Activated CD4-positive, alpha-beta memory T cell treated with anti-CD3 and anti-CD28 coated beads, Interleukin-2, amount 10 ng/mL, durations not matched to agents 7 days and 5 days (primary cell): ENCODE measurements at regions of chr15 and their contacts with region 1.

Region 1: DNA sequence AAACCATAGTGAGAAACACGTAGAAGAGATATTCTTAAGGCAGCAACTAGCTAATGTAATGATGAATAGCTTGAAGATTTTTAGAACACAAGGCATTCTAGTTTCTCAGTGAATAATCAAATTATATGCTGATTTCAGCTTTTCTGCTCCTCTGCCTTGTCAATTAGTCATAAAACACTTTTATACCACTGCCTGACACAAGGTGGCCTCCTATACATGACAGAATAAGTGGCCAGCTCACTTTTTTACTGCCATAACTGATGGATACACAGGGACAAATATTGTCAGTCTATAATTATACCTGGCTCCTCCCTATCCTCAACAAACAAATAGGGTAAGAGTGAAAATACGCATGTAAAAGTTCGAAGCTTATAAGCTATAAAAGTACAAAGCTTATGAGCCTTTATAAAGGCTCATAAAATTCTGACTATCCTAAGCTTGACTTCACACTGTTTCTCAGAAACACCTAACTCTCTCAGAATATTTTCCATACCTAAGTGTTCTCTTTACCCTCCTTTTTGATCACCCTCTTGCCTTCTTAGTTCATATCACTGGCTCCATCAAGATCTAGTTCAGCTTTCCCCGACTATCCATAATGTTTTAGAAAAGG is 81.6 kb downstream of the HERC1 start:
- DNase-seq: peak; percentile 38
- H3K4me3 Mint-ChIP-seq: no peak overlapping the region
- H3K27ac Mint-ChIP-seq: no peak overlapping the region
- H3K4me1 Mint-ChIP-seq: no peaks in the 10 kb centered on the region
- H3K27me3 Mint-ChIP-seq: no peaks in the 10 kb centered on the region

Region 2: DNA sequence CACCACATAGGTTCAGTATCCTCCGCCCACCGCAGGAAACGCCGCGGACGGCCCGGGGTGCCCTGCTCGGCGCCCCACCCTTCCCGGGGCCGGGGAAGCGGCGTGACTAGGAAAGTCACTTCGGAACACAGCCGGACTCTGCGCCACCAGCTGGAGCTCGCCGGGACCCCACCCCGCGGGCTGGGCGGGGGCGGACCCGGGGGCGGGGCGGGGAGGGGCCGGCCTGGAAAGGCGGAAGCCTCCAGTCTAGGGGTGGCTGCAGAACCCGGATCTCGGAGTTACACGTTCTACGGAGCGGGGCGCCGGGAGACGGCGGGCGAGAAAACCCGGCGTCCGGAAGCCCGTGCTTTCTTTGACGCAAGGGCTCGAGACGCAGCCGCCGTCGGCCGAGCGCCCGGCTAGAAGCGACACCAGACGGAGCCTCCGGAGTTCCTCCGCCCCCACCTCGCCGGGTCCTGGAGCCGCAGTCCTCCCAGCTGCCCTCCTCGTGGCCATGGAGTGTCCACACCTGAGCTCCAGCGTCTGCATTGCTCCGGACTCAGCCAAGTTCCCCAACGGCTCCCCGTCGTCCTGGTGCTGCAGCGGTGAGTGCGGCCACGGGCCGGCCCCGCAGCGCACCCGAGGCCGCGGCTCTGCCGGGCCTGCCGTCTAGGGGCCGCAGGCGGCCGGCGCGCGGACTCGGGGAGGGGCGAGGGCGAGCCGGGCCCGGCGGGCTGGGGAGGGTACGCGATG is 247.8 kb before region 1 on chr15 and contains the start of gene USP3:
- CTCF ChIA-PET with region 1: no interaction called
- POLR2A ChIA-PET with region 1: no interaction called
- DNase-seq: peak; percentile 94
- H3K4me3 Mint-ChIP-seq: peak within 1 kb of the TSS; percentile 94
- H3K27ac Mint-ChIP-seq: peak within 1 kb of the TSS; percentile 95
- H3K4me1 Mint-ChIP-seq: peaks cover 82% of the 10 kb centered on the region
- H3K27me3 Mint-ChIP-seq: no peaks in the 10 kb centered on the region
- total RNA-seq, gene USP3: 67.9 to 68.7 TPM

Region 3: GRCh38 chr15:63610200-63610841 is 141.9 kb before region 1 on chr15:
- CTCF ChIA-PET with region 1: interaction called, 21 read pairs
- POLR2A ChIA-PET with region 1: no interaction called
- DNase-seq: peak; percentile 86
- H3K4me3 Mint-ChIP-seq: no peak overlapping the region
- H3K27ac Mint-ChIP-seq: peak overlapping the region; percentile 86
- H3K4me1 Mint-ChIP-seq: peaks cover 49% of the 10 kb centered on the region
- H3K27me3 Mint-ChIP-seq: no peaks in the 10 kb centered on the region

Region 4: DNA sequence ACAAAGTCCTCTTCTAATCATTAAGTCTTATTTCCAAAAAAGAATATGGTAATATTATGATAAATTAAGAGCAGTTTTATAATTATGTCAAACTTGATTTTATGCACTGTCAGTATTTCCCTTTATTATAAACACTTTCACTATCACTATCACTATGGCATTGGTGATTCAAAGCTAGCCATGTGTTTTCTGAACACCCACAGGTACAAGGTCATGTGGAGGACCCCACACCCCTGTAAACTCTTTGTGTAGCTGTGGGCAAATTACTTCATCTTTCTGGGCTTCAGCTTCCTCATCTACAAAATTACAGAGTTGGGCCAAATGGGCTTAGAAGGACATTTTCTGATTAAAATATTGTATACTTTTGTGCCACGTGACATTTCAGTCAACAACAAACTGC is 113.3 kb before region 1 on chr15:
- CTCF ChIA-PET with region 1: no interaction called
- POLR2A ChIA-PET with region 1: no interaction called
- DNase-seq: no peak
- H3K4me3 Mint-ChIP-seq: no peak overlapping the region
- H3K27ac Mint-ChIP-seq: no peak overlapping the region
- H3K4me1 Mint-ChIP-seq: peaks cover 9% of the 10 kb centered on the region
- H3K27me3 Mint-ChIP-seq: no peaks in the 10 kb centered on the region

Region 5: DNA sequence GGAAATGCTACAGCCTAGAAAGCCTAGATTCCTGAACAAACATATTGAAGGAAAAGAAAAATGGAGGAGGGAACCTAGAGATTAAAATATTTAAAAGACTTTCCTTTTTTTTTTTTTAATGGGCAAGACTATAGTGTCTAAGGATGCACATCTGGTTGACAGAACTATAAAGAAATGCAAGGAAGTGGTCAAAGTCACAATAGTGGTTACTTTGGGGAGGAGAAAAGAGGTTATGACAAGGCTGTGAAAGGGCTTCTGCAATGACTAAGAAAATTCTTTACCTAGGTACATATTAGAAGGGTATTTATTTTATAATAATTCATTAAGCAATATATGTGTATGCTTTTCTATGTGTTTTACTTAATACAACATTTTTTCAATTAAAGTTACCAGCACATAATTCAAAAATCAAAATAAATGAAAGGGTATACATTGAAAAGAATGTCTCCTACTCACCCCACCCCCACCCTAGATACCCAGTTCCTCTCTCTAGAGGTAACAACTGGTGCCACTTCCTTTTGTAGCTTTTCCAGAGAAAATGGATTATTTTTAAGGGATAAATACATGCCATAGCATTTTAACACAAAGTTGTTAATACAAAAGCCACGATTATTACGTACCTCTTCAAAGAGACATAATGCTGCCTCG is 11.4 kb after region 1 on chr15:
- CTCF ChIA-PET with region 1: interaction called, 13 read pairs
- POLR2A ChIA-PET with region 1: interaction called, 3 read pairs
- DNase-seq: no peak
- H3K4me3 Mint-ChIP-seq: no peak overlapping the region
- H3K27ac Mint-ChIP-seq: peak overlapping the region; percentile 25
- H3K4me1 Mint-ChIP-seq: peaks cover 36% of the 10 kb centered on the region
- H3K27me3 Mint-ChIP-seq: no peaks in the 10 kb centered on the region

Region 6: DNA sequence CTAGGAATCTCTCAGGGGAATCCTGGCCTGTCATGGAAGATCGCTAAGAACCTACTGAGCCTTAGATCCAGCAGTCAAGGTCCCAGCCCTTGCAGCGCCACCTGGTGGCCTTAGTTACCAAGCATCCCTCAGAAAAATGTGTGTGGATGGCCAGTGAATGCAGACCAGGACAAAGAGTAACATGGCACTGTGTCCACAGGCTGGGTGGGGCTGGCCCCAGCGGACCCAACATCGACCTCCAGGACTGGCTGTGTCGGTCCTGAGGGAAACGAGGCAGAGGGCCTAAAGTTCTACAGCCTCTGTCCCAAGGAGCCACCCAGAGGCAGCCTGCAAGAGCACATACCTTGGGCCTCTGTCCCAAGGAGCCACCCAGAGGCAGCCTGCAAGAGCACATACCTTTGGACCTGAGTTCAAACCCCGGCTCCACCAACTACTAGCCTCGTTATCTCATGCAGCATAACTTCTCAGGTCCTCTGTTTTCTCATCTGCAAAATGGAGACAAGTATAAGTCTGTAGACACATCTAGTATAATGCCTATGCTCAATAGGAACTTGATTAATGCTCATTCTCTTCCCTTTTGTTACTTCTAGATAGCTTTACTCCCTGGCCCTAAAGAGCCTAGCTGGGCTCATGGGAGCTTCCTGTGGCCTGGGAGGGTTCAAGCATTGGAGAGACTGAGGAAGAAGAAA is 139.0 kb after region 1 on chr15:
- CTCF ChIA-PET with region 1: interaction called, 56 read pairs
- POLR2A ChIA-PET with region 1: interaction called, 4 read pairs
- DNase-seq: peak; percentile 77
- H3K4me3 Mint-ChIP-seq: no peak overlapping the region
- H3K27ac Mint-ChIP-seq: peak overlapping the region; percentile 28
- H3K4me1 Mint-ChIP-seq: peaks cover 46% of the 10 kb centered on the region
- H3K27me3 Mint-ChIP-seq: no peaks in the 10 kb centered on the region

Region 7: GRCh38 chr15:63970621-63971426 is 218.6 kb after region 1 on chr15:
- CTCF ChIA-PET with region 1: interaction called, 11 read pairs
- POLR2A ChIA-PET with region 1: no interaction called
- DNase-seq: peak; percentile 47
- H3K4me3 Mint-ChIP-seq: peak overlapping the region; percentile 65
- H3K27ac Mint-ChIP-seq: peak overlapping the region; percentile 96
- H3K4me1 Mint-ChIP-seq: peaks cover 47% of the 10 kb centered on the region
- H3K27me3 Mint-ChIP-seq: no peaks in the 10 kb centered on the region

Region 8: GRCh38 chr15:64010719-64011118 is 258.5 kb after region 1 on chr15:
- CTCF ChIA-PET with region 1: interaction called, 18 read pairs
- POLR2A ChIA-PET with region 1: interaction called, 4 read pairs
- DNase-seq: peak; percentile 92
- H3K4me3 Mint-ChIP-seq: peak overlapping the region; percentile 42
- H3K27ac Mint-ChIP-seq: peak overlapping the region; percentile 86
- H3K4me1 Mint-ChIP-seq: peaks cover 58% of the 10 kb centered on the region
- H3K27me3 Mint-ChIP-seq: no peaks in the 10 kb centered on the region

Region 9: GRCh38 chr15:64067564-64068030 is 315.4 kb after region 1 on chr15:
- CTCF ChIA-PET with region 1: interaction called, 89 read pairs
- POLR2A ChIA-PET with region 1: interaction called, 3 read pairs
- DNase-seq: peak; percentile 70
- H3K4me3 Mint-ChIP-seq: no peak overlapping the region
- H3K27ac Mint-ChIP-seq: peak overlapping the region; percentile 49
- H3K4me1 Mint-ChIP-seq: peaks cover 16% of the 10 kb centered on the region
- H3K27me3 Mint-ChIP-seq: no peaks in the 10 kb centered on the region